ENCODE measurements at regions of chr6 and their contacts with region 1.

Region 1: GRCh38 chr6:33279971-33280511 is 3.1 kb downstream of the B3GALT4 start:
- DNase-seq: no peak
- ATAC-seq: no peak
- H3K4me3 ChIP-seq: no peak overlapping the region
- H3K27ac ChIP-seq: no peak overlapping the region
- H3K4me1 ChIP-seq: peaks cover 3 to 40% (median 27%) of the 10 kb centered on the region in 9 donors
- H3K27me3 ChIP-seq: no peaks in the 10 kb centered on the region
- CTCF ChIP-seq: peak in 6 of 9 donors; percentile 16 to 52 (median 44)

Region 2: GRCh38 chr6:32692019-32692418 is 588.0 kb before region 1 on chr6:
- intact Hi-C with region 1: no loop called
- DNase-seq: peak in 1 of 2 donors; percentile 14
- ATAC-seq: no peak
- H3K4me3 ChIP-seq: no peak overlapping the region
- H3K27ac ChIP-seq: no peak overlapping the region
- H3K4me1 ChIP-seq: no peaks in the 10 kb centered on the region
- H3K27me3 ChIP-seq: peaks cover 0 to 42% (median 0%) of the 10 kb centered on the region in 7 donors
- CTCF ChIP-seq: peak in 5 of 9 donors; percentile 37 to 54 (median 45)

Region 3: DNA sequence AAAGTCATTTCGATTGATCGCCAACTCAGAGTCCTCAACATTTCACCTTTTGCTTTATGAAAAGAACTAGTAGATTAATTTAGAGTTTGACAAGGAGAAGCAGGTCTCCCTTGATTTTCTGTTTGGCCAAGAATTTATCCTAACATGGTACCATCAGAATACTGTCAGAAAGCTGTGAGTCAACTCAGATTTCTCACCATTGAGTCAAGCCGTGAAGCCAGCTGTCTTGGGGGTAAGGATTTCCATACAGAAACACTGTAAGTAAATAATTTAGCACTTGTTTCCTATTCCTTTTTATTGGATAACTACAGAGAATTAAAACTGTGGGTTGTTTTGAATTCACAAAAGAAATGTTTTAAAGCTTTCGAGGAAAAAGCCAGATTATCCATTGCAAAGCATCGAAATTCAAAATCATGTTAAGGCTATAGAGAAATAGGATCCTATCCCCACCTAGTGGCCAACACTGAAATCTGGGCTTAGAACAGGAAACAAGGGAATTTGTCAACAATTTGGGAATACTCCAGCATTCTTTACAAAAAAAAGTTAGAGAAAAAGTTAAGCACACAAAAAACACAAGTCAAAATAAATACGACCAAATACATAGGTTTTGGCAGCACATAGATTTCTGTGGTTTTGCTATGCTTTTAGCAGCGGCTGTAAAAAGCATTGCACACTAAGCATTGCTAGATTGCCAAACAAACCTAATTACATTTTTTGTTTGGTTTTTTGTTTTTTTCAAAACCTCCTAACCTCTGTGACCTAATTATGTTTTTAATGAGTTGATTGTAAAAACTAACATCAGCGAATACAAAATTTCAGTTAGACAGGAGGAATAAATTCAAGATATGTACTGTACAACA is 132.0 kb before region 1 on chr6:
- intact Hi-C with region 1: no loop called
- DNase-seq: no peak
- ATAC-seq: no peak
- H3K4me3 ChIP-seq: no peak overlapping the region
- H3K27ac ChIP-seq: no peak overlapping the region
- H3K4me1 ChIP-seq: peaks cover 0 to 15% (median 0%) of the 10 kb centered on the region in 9 donors
- H3K27me3 ChIP-seq: peaks cover 0 to 25% (median 17%) of the 10 kb centered on the region in 7 donors
- CTCF ChIP-seq: peak; percentile 43 to 87 (median 82)

Region 4: GRCh38 chr6:33344701-33345697 is 65.0 kb after region 1 on chr6:
- intact Hi-C with region 1: loop called in 1 of 10 experiments (anchors 2 kb)
- DNase-seq: peak; percentile 27 to 65
- ATAC-seq: peak in 6 of 8 donors; percentile 43 to 75 (median 65)
- H3K4me3 ChIP-seq: peak overlapping the region in 1 of 10 donors; percentile 15
- H3K27ac ChIP-seq: peak overlapping the region in 1 of 10 donors; percentile 82
- H3K4me1 ChIP-seq: peaks cover 0 to 12% (median 0%) of the 10 kb centered on the region in 9 donors
- H3K27me3 ChIP-seq: no peaks in the 10 kb centered on the region
- CTCF ChIP-seq: peak; percentile 38 to 73 (median 63)